Gastrocnemius medialis (tissue), 4 donors: ENCODE measurements at regions of chr2 and their contacts with region 1.

Region 1: DNA sequence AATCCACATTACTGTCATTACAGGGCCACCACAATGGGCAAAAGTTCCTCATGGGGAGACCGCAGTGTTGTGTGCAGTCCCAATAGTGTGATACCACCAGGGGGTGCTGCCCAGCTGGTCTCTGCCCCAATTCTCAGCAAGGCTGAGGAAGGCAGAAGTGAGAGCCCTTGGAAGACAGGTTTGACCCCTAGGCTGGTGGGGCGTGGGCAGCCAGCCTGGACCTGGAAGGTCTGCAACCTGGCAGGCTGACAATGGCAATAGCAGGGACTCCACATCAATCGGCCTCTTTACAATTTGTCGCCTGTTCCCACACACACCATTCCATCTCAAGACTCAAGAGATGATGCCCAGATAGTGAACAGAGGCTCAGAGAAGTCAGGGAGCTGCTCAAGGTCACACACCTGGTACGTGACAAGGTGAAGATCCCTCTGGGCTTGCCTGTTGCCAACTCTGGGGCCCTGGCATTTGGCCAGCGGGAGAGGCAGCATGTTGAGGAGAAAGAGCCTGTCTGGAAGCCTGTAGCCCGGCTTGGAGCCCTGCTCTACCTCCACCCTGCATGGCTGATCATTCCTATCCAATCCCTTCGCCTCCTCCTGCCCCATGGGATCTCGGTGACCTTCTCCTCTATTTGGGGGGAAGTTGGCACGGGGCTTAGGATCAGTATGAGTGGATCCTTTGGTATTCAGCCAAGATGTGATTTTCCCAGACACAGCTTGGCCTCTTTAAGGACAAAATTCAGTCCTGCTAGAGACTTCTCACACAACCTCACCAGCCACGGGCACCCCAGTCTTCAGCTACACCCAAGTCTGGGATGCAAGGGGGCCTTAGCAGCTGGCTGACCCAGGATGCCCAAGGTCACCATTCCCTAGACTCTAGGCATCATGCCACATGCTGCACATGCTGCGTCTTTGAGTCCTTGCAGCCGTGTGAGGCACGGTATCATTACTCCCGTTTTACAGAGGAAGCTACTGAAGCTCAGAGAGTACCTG is 2.9 kb upstream of the ATOH8 start:
- DNase-seq: peak in 1 of 2 donors; percentile 82
- ATAC-seq: peak; percentile 27 to 37
- H3K4me3 ChIP-seq: no peak overlapping the region
- H3K27ac ChIP-seq: peak overlapping the region; percentile 86 to 95 (median 93)
- H3K4me1 ChIP-seq: peaks cover 52 to 64% of the 10 kb centered on the region in 2 donors
- H3K27me3 ChIP-seq: no peaks in the 10 kb centered on the region
- CTCF ChIP-seq: peak; percentile 68 to 90 (median 83)
- POLR2A ChIP-seq: no peak

Region 2: GRCh38 chr2:85772019-85772745 is 21.3 kb after region 1 on chr2:
- in situ Hi-C with region 1: no loop called
- intact Hi-C with region 1: loop called (anchors 1 kb)
- DNase-seq: peak; percentile 97 to 99
- ATAC-seq: peak; percentile 72 to 84
- H3K4me3 ChIP-seq: peak overlapping the region; percentile 38 to 55 (median 41)
- H3K27ac ChIP-seq: peak overlapping the region; percentile 84 to 97 (median 92)
- H3K4me1 ChIP-seq: peaks cover 95% of the 10 kb centered on the region in 2 donors
- H3K27me3 ChIP-seq: no peaks in the 10 kb centered on the region
- CTCF ChIP-seq: peak in 2 of 5 experiments; percentile 20 to 44
- POLR2A ChIP-seq: peak; percentile 53 to 60

Region 3: GRCh38 chr2:85804583-85804982 is 53.7 kb after region 1 on chr2:
- in situ Hi-C with region 1: loop called in 1 of 4 experiments (anchors 10 kb)
- intact Hi-C with region 1: loop called (anchors 2 kb)
- DNase-seq: no peak
- ATAC-seq: peak in 1 of 2 donors; percentile 43
- H3K4me3 ChIP-seq: no peak overlapping the region
- H3K27ac ChIP-seq: no peak overlapping the region
- H3K4me1 ChIP-seq: peaks cover 8 to 11% of the 10 kb centered on the region in 2 donors
- H3K27me3 ChIP-seq: no peaks in the 10 kb centered on the region
- CTCF ChIP-seq: peak; percentile 47 to 75 (median 72)
- POLR2A ChIP-seq: no peak

Region 4: GRCh38 chr2:86123328-86123925 is 372.5 kb after region 1 on chr2:
- in situ Hi-C with region 1: no loop called
- intact Hi-C with region 1: no loop called
- DNase-seq: no peak
- ATAC-seq: no peak
- H3K4me3 ChIP-seq: no peak overlapping the region
- H3K27ac ChIP-seq: no peak overlapping the region
- H3K4me1 ChIP-seq: no peaks in the 10 kb centered on the region
- H3K27me3 ChIP-seq: no peaks in the 10 kb centered on the region
- CTCF ChIP-seq: no peak
- POLR2A ChIP-seq: no peak